Thyroid gland (tissue), 4 donors: ENCODE measurements at regions of chr19 and their contacts with region 1.

Region 1: DNA sequence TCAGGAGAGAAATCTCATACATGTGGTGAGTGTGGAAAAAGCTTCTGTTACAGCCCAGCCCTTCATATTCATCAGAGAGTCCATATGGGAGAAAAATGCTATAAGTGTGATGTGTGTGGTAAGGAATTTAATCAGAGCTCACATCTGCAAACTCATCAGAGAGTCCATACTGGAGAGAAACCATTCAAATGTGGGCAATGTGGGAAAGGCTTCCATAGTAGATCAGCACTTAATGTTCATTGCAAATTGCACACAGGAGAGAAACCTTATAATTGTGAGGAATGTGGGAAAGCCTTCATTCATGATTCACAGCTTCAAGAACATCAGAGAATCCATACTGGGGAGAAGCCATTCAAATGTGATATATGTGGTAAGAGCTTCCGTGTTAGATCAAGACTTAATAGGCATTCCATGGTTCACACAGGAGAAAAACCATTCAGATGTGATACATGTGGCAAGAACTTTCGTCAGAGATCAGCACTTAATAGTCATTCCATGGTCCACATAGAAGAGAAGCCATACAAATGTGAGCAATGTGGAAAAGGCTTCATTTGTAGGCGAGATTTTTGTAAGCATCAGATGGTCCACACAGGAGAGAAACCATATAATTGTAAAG is 15.2 kb downstream of the ZNF221 start:
- DNase-seq: no peak
- H3K4me3 ChIP-seq: no peak overlapping the region
- H3K27ac ChIP-seq: no peak overlapping the region
- H3K4me1 ChIP-seq: no peaks in the 10 kb centered on the region
- H3K27me3 ChIP-seq: no peaks in the 10 kb centered on the region
- CTCF ChIP-seq: no peak
- POLR2A ChIP-seq: no peak

Region 2: GRCh38 chr19:43687660-43687997 is 278.6 kb before region 1 on chr19:
- intact Hi-C with region 1: no loop called
- DNase-seq: no peak
- H3K4me3 ChIP-seq: no peak overlapping the region
- H3K27ac ChIP-seq: no peak overlapping the region
- H3K4me1 ChIP-seq: no peaks in the 10 kb centered on the region
- H3K27me3 ChIP-seq: no peaks in the 10 kb centered on the region
- CTCF ChIP-seq: no peak
- POLR2A ChIP-seq: no peak

Region 3: DNA sequence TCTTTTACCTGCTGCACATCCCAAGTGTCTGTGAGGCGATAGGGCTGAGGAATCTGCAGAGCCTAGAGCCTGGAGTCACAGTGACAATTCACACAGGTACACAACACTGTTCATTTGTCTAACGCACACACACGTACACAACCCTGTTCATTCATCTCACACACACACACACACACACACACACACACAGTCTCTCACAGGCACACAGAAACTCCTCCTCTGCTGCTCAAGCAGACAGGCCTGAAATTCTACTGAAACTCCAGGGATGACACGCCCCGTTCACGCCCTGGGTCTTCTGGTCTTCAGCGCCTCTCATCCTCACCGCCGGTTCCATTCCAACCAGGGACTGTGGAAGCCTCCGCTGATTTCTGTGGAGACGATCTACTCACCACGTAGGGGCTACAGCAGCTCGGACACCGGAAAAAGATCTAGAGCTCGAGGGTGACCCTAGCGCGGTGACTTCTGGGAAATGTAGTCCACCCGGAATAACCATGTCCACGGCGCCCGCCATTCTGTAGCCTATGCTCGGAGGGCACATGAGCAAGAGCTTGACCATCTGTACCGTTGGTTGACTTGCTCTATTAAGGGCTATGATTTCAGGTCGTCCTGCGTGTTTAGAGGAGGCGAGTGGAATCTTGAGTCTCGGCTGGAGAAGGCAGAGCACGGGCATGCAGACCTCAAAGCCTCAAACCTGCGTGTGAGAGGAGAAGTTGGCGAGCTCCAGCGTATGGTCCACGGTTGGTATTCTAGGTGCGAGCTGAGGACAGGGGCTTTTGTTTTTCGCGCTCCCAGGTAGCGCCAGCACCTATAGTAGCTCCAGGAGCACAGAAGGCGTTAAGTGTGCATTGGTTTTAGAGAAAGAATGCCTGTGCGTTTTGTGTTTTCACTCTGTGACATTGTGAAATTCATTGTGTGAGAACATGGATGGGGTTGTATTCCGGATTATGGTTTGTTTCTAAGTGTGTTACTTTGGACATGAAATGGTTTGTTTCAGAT is 64.5 kb before region 1 on chr19:
- intact Hi-C with region 1: loop called (anchors 10 kb)
- DNase-seq: peak; percentile 76
- H3K4me3 ChIP-seq: peak overlapping the region in 2 of 3 donors; percentile 33 to 48
- H3K27ac ChIP-seq: no peak overlapping the region
- H3K4me1 ChIP-seq: no peaks in the 10 kb centered on the region
- H3K27me3 ChIP-seq: no peaks in the 10 kb centered on the region
- CTCF ChIP-seq: no peak
- POLR2A ChIP-seq: no peak

Region 4: DNA sequence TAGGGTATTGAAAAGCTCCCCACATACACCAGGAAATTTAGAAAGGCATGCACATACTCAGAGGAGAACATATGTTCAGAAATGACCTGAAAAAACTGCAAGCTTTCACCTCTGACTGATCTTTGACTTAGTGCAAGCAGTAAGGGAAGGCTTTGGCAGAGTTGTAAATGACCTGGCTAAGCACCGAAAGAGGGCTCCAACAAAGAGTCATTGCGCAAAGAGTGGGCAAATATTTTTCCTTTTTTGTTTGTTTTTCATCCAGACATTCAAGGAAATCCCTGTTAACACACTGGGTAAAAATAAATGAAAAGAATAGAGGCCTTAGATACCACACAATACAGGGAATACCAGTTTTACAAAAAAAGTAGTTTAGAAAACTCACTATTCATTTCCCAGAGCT is 288.3 kb after region 1 on chr19:
- intact Hi-C with region 1: loop called (anchors 10 kb)
- DNase-seq: no peak
- H3K4me3 ChIP-seq: no peak overlapping the region
- H3K27ac ChIP-seq: no peak overlapping the region
- H3K4me1 ChIP-seq: no peaks in the 10 kb centered on the region
- H3K27me3 ChIP-seq: no peaks in the 10 kb centered on the region
- CTCF ChIP-seq: no peak
- POLR2A ChIP-seq: no peak

Region 5: DNA sequence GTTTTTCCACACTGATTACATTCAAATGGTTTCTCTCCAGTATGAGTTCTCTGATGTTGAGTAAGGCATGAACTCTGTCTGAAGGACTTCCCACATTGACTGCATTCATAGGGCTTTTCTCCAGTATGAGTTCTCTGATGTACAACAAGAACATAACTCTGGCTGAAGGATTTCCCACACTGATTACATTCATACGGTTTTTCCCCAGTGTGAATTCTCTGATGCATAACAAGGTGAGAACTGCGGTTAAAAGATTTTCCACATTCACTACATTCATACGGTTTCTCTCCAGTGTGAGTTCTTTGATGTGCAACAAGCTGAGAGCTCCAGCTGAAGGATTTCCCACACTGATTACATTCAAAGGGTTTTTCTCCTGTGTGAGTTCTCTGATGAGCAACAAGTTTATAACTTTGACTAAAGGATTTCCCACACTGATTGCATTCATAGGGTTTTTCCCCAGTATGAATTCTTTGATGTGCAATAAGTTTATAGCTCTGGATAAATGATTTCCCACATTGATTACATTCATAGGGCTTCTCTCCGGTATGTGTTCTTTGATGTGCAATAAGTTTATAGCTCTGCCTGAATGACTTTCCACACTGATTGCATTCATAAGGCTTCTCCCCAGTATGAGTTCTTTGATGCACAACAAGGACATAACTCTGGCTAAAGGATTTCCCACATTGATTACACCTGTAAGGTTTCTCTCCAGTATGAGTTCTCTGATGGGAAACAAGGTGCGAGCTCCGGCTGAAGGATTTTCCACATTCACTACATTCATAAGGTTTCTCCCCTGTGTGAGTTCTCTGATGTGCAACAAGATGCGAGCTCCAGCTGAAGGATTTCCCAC is 510.6 kb after region 1 on chr19:
- intact Hi-C with region 1: loop called (anchors 10 kb)
- DNase-seq: no peak
- H3K4me3 ChIP-seq: no peak overlapping the region
- H3K27ac ChIP-seq: no peak overlapping the region
- H3K4me1 ChIP-seq: no peaks in the 10 kb centered on the region
- H3K27me3 ChIP-seq: no peaks in the 10 kb centered on the region
- CTCF ChIP-seq: no peak
- POLR2A ChIP-seq: no peak